ENCODE measurements at regions of chr6 and their contacts with region 1.

Region 1: GRCh38 chr6:108896111-108896661 is 48.0 kb downstream of the ARMC2 start:
- DNase-seq: peak in 1 of 2 donors; percentile 77
- ATAC-seq: peak; percentile 81 to 90 (median 86)
- H3K4me3 ChIP-seq: no peak overlapping the region
- H3K4me3 Mint-ChIP-seq: peak overlapping the region; percentile 94
- H3K27ac ChIP-seq: peak overlapping the region; percentile 91
- H3K27ac Mint-ChIP-seq: peak overlapping the region; percentile 91 to 95
- H3K4me1 ChIP-seq: peaks cover 39% of the 10 kb centered on the region
- H3K4me1 Mint-ChIP-seq: peaks cover 39 to 43% of the 10 kb centered on the region in 2 donors
- H3K27me3 ChIP-seq: no peaks in the 10 kb centered on the region
- H3K27me3 Mint-ChIP-seq: no peaks in the 10 kb centered on the region
- CTCF ChIP-seq: no peak

Region 2: DNA sequence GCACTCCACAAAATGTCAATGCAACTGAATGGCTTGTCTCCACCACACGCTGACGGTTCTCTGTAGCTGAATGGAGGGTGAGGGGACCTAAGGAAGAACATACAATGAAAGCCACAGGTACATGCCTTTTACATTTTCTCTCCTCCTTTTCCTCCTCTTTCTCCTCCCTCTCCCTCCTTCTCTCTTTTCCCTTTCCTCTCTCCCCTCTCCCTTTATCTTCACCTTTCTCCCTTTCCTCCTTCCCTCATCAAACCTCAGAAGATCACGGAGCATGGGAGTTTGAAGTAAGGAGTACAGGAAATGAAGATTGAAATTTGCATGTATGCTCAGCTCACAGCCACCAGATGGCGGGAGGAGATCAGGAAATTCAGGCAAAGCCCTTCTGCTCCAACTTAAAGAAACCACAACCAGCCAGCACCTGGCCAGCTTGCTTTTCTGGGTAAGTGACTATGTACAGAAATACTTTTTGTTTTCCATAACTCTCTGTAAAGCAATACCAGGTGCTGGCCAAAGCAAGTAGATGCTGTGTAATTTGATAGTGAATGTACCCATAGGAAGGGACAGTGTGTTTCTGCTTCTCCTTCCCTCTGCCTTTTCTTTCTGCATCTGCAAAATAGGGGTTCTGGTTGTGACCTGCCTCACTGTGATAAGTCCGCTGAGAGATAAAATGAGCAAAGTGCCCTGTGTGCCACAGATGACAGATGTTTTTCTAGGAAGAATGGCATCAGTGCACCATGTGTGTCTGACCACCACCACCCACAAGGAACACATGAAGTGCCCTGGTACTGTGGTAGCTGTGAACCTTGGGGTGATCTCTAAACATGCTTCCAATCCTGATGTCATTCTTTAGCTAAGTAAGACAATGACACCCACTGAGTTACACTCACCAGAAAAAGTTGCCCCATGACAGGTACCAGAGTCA is 354.1 kb before region 1 on chr6:
- intact Hi-C with region 1: loop called (anchors 1 kb)
- DNase-seq: peak; percentile 56 to 90
- ATAC-seq: peak; percentile 77 to 81 (median 81)
- H3K4me3 ChIP-seq: no peak overlapping the region
- H3K4me3 Mint-ChIP-seq: no peak overlapping the region
- H3K27ac ChIP-seq: no peak overlapping the region
- H3K27ac Mint-ChIP-seq: peak overlapping the region in 1 of 2 donors; percentile 41
- H3K4me1 ChIP-seq: peaks cover 13% of the 10 kb centered on the region
- H3K4me1 Mint-ChIP-seq: peaks cover 28 to 41% of the 10 kb centered on the region in 2 donors
- H3K27me3 ChIP-seq: no peaks in the 10 kb centered on the region
- H3K27me3 Mint-ChIP-seq: no peaks in the 10 kb centered on the region
- CTCF ChIP-seq: peak; percentile 95

Region 3: DNA sequence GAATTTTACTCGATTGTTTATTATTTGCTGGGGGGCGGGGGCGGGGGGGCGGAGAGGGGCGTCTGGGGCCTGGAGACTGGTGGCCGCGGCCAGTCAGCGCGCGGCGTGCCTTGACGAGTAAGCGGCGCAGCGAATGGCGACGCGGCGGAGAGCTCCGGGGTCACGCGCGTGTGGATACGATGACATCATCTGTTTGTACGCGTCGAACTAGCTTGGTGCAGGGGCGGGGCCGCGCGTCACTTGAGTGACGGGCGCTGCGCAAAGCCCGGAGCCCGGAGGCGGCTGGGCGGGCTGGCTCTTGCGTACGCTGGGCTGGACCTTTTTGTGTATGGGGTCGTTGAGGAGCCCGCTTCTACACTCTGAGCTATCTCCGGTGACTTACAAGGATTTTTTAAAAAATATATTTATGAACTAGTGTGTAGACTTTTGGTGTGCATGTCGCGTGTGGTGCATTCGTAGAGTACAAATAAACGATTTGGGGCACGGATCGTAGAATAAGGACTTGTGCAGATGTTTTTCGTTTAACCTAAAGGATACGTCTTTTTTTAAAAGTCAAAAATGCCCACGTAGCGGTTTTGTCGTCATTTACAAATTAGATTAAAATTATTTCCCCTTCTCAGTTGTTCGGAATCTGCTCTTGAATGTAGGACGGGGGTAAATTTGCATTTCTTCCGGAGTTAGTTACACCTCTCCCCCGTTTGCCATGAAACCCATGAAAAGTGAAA is 337.7 kb before region 1 on chr6:
- intact Hi-C with region 1: loop called (anchors 5 kb)
- DNase-seq: peak; percentile 97 to 99
- ATAC-seq: peak; percentile 59 to 80 (median 66)
- H3K4me3 ChIP-seq: peak overlapping the region; percentile 96
- H3K4me3 Mint-ChIP-seq: peak overlapping the region; percentile 96
- H3K27ac ChIP-seq: peak overlapping the region; percentile 100
- H3K27ac Mint-ChIP-seq: peak overlapping the region; percentile 97 to 98
- H3K4me1 ChIP-seq: peaks cover 21% of the 10 kb centered on the region
- H3K4me1 Mint-ChIP-seq: peaks cover 20 to 27% of the 10 kb centered on the region in 2 donors
- H3K27me3 ChIP-seq: no peaks in the 10 kb centered on the region
- H3K27me3 Mint-ChIP-seq: no peaks in the 10 kb centered on the region
- CTCF ChIP-seq: no peak

Region 4: GRCh38 chr6:108835218-108835850 is 60.9 kb before region 1 on chr6:
- intact Hi-C with region 1: loop called (anchors 5 kb)
- DNase-seq: peak; percentile 80 to 92
- ATAC-seq: peak; percentile 77 to 92 (median 78)
- H3K4me3 ChIP-seq: no peak overlapping the region
- H3K4me3 Mint-ChIP-seq: peak overlapping the region; percentile 32
- H3K27ac ChIP-seq: no peak overlapping the region
- H3K27ac Mint-ChIP-seq: peak overlapping the region; percentile 2 to 31
- H3K4me1 ChIP-seq: peaks cover 29% of the 10 kb centered on the region
- H3K4me1 Mint-ChIP-seq: peaks cover 41 to 46% of the 10 kb centered on the region in 2 donors
- H3K27me3 ChIP-seq: no peaks in the 10 kb centered on the region
- H3K27me3 Mint-ChIP-seq: no peaks in the 10 kb centered on the region
- CTCF ChIP-seq: peak; percentile 94

Region 5: GRCh38 chr6:108874470-108875160 is 21.6 kb before region 1 on chr6:
- intact Hi-C with region 1: no loop called
- DNase-seq: peak; percentile 36 to 49
- ATAC-seq: peak; percentile 64 to 75 (median 68)
- H3K4me3 ChIP-seq: no peak overlapping the region
- H3K4me3 Mint-ChIP-seq: peak overlapping the region; percentile 84
- H3K27ac ChIP-seq: peak overlapping the region; percentile 82
- H3K27ac Mint-ChIP-seq: peak overlapping the region; percentile 93 to 95
- H3K4me1 ChIP-seq: peaks cover 42% of the 10 kb centered on the region
- H3K4me1 Mint-ChIP-seq: peaks cover 56% of the 10 kb centered on the region in 2 donors
- H3K27me3 ChIP-seq: no peaks in the 10 kb centered on the region
- H3K27me3 Mint-ChIP-seq: no peaks in the 10 kb centered on the region
- CTCF ChIP-seq: no peak

Region 6: GRCh38 chr6:108966855-108967755 is 70.9 kb after region 1 on chr6:
- intact Hi-C with region 1: loop called (anchors 2 kb)
- DNase-seq: peak; percentile 52 to 53
- ATAC-seq: peak; percentile 89 to 95 (median 92)
- H3K4me3 ChIP-seq: no peak overlapping the region
- H3K4me3 Mint-ChIP-seq: peak overlapping the region; percentile 62
- H3K27ac ChIP-seq: peak overlapping the region; percentile 54
- H3K27ac Mint-ChIP-seq: peak overlapping the region; percentile 59 to 88
- H3K4me1 ChIP-seq: peaks cover 47% of the 10 kb centered on the region
- H3K4me1 Mint-ChIP-seq: peaks cover 40 to 46% of the 10 kb centered on the region in 2 donors
- H3K27me3 ChIP-seq: no peaks in the 10 kb centered on the region
- H3K27me3 Mint-ChIP-seq: no peaks in the 10 kb centered on the region
- CTCF ChIP-seq: no peak

Region 7: GRCh38 chr6:108998485-108998884 is 102.3 kb after region 1 on chr6:
- intact Hi-C with region 1: no loop called
- DNase-seq: no peak
- ATAC-seq: no peak
- H3K4me3 ChIP-seq: no peak overlapping the region
- H3K4me3 Mint-ChIP-seq: no peak overlapping the region
- H3K27ac ChIP-seq: no peak overlapping the region
- H3K27ac Mint-ChIP-seq: peak overlapping the region in 1 of 2 donors; percentile 29
- H3K4me1 ChIP-seq: peaks cover 3% of the 10 kb centered on the region
- H3K4me1 Mint-ChIP-seq: peaks cover 18 to 22% of the 10 kb centered on the region in 2 donors
- H3K27me3 ChIP-seq: no peaks in the 10 kb centered on the region
- H3K27me3 Mint-ChIP-seq: no peaks in the 10 kb centered on the region
- CTCF ChIP-seq: no peak

Region 8: DNA sequence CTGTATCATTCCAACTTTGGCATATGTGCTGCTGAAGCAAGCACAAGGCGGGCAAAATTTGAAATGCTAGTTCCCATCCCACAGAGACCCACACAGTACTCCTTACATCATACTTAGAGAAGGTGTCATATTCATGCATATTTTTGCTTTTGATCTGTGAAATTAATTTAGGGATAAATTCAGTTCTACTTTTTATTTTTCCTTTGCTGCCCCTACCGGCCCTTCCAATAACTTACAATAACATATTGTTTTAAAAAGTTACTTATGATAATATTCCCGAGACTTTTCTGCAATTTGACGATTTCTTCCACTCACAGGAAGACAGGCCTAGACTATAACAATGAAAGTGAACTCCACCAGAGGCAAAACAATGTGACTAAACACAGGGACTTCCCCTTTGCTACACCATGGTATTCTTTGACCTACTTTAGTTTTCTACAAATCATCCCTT is 163.4 kb after region 1 on chr6:
- intact Hi-C with region 1: loop called (anchors 1 kb)
- DNase-seq: peak in 1 of 2 donors; percentile 79
- ATAC-seq: peak; percentile 97 to 99 (median 98)
- H3K4me3 ChIP-seq: no peak overlapping the region
- H3K4me3 Mint-ChIP-seq: peak overlapping the region; percentile 57
- H3K27ac ChIP-seq: peak overlapping the region; percentile 85
- H3K27ac Mint-ChIP-seq: peak overlapping the region; percentile 94 to 95
- H3K4me1 ChIP-seq: peaks cover 13% of the 10 kb centered on the region
- H3K4me1 Mint-ChIP-seq: peaks cover 42 to 48% of the 10 kb centered on the region in 2 donors
- H3K27me3 ChIP-seq: no peaks in the 10 kb centered on the region
- H3K27me3 Mint-ChIP-seq: no peaks in the 10 kb centered on the region
- CTCF ChIP-seq: no peak

Region 9: GRCh38 chr6:109336221-109336961 is 440.2 kb after region 1 on chr6:
- intact Hi-C with region 1: no loop called
- DNase-seq: no peak
- ATAC-seq: no peak
- H3K4me3 ChIP-seq: no peak overlapping the region
- H3K4me3 Mint-ChIP-seq: no peak overlapping the region
- H3K27ac ChIP-seq: no peak overlapping the region
- H3K27ac Mint-ChIP-seq: no peak overlapping the region
- H3K4me1 ChIP-seq: peaks cover 12% of the 10 kb centered on the region
- H3K4me1 Mint-ChIP-seq: peaks cover 19 to 29% of the 10 kb centered on the region in 2 donors
- H3K27me3 ChIP-seq: no peaks in the 10 kb centered on the region
- H3K27me3 Mint-ChIP-seq: no peaks in the 10 kb centered on the region
- CTCF ChIP-seq: no peak